Mammary epithelial cell (primary cell): ENCODE measurements at regions of chr20 and their contacts with region 1.

Region 1: GRCh38 chr20:62386383-62387218 is at the start of gene RPS21:
- DNase-seq: peak; percentile 85
- H3K4me3 ChIP-seq: peak within 1 kb of the TSS; percentile 90 to 100 (median 92)
- H3K27ac ChIP-seq: peak within 1 kb of the TSS; percentile 66
- H3K4me1 ChIP-seq: peaks cover 19% of the 10 kb centered on the region
- H3K27me3 ChIP-seq: no peaks in the 10 kb centered on the region
- CTCF ChIP-seq: no peak
- total RNA-seq, gene RPS21: 894 to 1,553 TPM

Region 2: DNA sequence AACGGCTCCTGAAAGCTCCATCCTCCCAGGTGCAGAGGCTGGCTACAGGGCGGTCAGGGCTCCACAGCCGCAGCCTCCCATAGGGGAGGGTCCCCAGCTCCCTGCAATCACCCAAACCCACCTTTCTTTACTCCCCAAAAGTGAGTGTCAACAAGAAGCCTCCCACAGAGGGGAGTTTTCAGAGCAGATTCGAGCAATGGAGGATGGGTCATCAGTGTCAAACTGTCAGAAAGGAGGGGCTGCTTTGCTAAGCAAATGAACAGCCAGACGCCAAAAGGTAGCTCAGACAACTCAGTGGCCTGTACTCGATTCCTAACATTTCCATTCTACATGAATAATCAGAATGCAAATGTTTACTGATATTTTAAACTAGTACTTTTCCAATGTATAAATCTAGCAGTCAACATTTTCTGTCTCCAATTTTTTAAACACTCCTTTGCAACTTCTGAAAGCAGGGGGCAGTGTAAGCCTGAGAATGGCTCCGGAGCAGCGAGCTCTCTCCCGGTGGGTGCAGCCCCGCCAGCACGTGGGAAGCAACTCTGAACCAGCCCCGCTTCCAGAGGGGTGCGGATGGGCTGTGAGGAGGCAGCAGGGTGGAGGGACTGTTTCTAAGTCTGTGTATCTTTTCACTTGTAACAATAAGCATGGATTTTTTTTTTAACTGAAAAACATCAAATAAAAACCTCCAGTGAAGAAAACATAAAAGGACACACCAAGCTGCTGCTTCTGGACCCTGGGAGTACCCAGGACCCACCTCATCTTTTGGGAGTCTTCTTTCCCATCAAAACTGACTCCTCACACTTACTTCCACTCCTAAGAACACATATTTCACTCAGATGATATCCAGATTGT is 375.8 kb before region 1 on chr20:
- CTCF ChIA-PET with region 1: no interaction called
- dilution Hi-C with region 1: no loop called
- in situ Hi-C with region 1: no loop called
- intact Hi-C with region 1: loop called (anchors 10 kb)
- DNase-seq: peak; percentile 10
- H3K4me3 ChIP-seq: no peak overlapping the region
- H3K27ac ChIP-seq: no peak overlapping the region
- H3K4me1 ChIP-seq: peaks cover 3% of the 10 kb centered on the region
- H3K27me3 ChIP-seq: no peaks in the 10 kb centered on the region
- CTCF ChIP-seq: peak; percentile 35 to 69

Region 3: GRCh38 chr20:62182613-62183425 is 203.8 kb before region 1 on chr20 and contains the start of gene MTG2:
- CTCF ChIA-PET with region 1: no interaction called
- dilution Hi-C with region 1: no loop called
- in situ Hi-C with region 1: no loop called
- intact Hi-C with region 1: loop called (anchors 10 kb)
- DNase-seq: peak; percentile 91
- H3K4me3 ChIP-seq: peak within 1 kb of the TSS; percentile 93 to 99 (median 95)
- H3K27ac ChIP-seq: peak within 1 kb of the TSS; percentile 82
- H3K4me1 ChIP-seq: peaks cover 11% of the 10 kb centered on the region
- H3K27me3 ChIP-seq: no peaks in the 10 kb centered on the region
- CTCF ChIP-seq: no peak
- total RNA-seq, gene MTG2: 20.7 to 38.6 TPM

Region 4: GRCh38 chr20:62350093-62350628 is 36.4 kb before region 1 on chr20:
- CTCF ChIA-PET with region 1: interaction called, 7 read pairs
- dilution Hi-C with region 1: no loop called
- in situ Hi-C with region 1: no loop called
- intact Hi-C with region 1: loop called (anchors 1 kb)
- DNase-seq: peak; percentile 94
- H3K4me3 ChIP-seq: no peak overlapping the region
- H3K27ac ChIP-seq: peak overlapping the region; percentile 77
- H3K4me1 ChIP-seq: peaks cover 50% of the 10 kb centered on the region
- H3K27me3 ChIP-seq: no peaks in the 10 kb centered on the region
- CTCF ChIP-seq: no peak

Region 5: DNA sequence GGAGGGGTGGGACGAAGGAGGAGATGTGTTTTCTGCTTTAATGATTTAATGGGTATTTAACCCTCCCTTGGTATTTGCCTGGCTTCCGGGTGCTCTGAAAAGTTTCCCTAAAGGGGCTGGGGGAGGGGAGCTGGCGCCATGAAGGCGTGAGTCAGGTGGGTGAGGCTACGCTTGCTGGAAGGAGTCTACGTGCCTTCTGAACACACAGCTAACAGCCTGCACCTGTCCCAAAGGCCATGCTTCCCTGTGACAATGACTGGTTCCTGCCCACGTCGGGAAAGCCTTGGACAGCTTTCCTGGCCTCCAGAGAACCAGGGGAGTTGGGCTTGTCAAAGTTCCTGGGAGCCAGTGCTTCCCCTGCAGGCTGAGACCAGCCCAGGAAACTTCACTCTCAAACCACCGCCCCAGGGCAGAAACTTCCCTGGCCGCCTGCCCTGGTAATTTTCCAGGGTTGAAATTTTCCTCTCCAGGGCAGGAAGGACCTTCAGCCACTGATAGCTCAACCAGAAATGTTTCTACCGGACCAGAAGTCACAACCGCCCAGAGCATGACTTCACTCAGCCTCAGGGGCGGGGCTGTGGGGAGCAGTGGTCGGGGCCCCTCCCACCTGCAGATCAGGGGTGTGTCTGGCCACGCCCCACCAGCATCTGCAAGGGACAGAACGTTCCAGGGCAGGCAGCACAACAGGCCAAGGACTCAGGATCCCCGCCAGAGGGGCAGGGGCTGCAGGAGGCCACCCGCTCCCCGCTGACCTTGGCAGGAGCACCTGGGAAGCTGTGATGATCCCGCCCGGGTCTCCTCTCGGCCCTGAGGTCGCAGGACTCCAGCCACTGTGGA is 237.1 kb after region 1 on chr20:
- CTCF ChIA-PET with region 1: no interaction called
- dilution Hi-C with region 1: no loop called
- in situ Hi-C with region 1: loop called in 1 of 2 experiments (anchors 25 kb)
- intact Hi-C with region 1: loop called (anchors 5 kb)
- DNase-seq: peak; percentile 91
- H3K4me3 ChIP-seq: no peak overlapping the region
- H3K27ac ChIP-seq: peak overlapping the region; percentile 87
- H3K4me1 ChIP-seq: peaks cover 22% of the 10 kb centered on the region
- H3K27me3 ChIP-seq: no peaks in the 10 kb centered on the region
- CTCF ChIP-seq: peak in 1 of 2 donors; percentile 9